MCF 10A (cell line): ENCODE measurements at regions of chr3 and their contacts with region 1.

Region 1: GRCh38 chr3:109275702-109276293 is 40.5 kb downstream of the DPPA2 start:
- DNase-seq: peak; percentile 58
- H3K4me3 Mint-ChIP-seq: no peak overlapping the region
- H3K27ac Mint-ChIP-seq: no peak overlapping the region
- H3K4me1 Mint-ChIP-seq: no peaks in the 10 kb centered on the region
- H3K27me3 Mint-ChIP-seq: no peaks in the 10 kb centered on the region
- CTCF ChIP-seq: peak; percentile 70

Region 2: DNA sequence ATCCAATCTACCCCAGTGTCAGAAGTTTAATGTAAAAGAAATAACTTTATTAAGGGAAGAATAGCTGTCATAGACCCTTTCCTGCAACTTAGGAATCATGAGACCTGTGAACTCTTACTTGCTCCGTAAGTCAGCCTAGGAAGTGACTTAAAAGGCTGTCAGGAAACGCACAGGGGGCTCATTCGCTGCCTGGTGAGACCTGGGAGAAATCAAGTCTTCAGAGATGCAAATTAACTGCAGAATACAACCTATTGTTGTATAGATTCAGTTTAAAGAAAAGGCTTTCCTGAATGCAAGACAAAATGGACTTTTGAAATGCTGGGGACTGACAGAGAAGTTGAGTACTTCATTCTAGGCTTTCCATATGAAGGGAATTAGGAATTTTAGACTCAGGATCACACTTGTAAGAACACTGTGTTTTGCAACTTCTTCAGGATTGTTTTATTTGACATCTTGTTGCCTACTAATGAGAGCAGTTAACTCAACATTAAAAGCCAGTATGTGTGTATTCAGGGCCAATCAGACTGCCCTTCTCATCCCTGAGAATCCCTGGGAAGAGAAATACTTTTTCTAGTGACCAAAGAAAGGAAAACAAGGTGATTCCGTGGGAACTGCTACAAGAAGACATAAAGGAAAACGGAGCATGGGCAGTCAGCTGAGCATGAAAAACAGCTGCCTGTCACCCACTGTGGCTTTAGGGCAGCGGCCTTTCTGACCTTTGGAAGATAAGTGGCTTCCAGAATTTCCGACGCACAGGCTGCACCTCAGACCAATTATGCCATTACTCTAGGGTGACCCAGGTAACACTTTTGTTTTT is 80.0 kb after region 1 on chr3:
- CTCF ChIA-PET with region 1: no interaction called
- POLR2A ChIA-PET with region 1: no interaction called
- intact Hi-C with region 1: no loop called
- DNase-seq: no peak
- H3K4me3 Mint-ChIP-seq: no peak overlapping the region
- H3K27ac Mint-ChIP-seq: no peak overlapping the region
- H3K4me1 Mint-ChIP-seq: no peaks in the 10 kb centered on the region
- H3K27me3 Mint-ChIP-seq: no peaks in the 10 kb centered on the region
- CTCF ChIP-seq: no peak

Region 3: GRCh38 chr3:109369510-109369909 is 93.7 kb after region 1 on chr3:
- CTCF ChIA-PET with region 1: interaction called, 3 read pairs
- POLR2A ChIA-PET with region 1: no interaction called
- intact Hi-C with region 1: loop called (anchors 1 kb)
- DNase-seq: no peak
- H3K4me3 Mint-ChIP-seq: no peak overlapping the region
- H3K27ac Mint-ChIP-seq: no peak overlapping the region
- H3K4me1 Mint-ChIP-seq: no peaks in the 10 kb centered on the region
- H3K27me3 Mint-ChIP-seq: no peaks in the 10 kb centered on the region
- CTCF ChIP-seq: no peak

Region 4: DNA sequence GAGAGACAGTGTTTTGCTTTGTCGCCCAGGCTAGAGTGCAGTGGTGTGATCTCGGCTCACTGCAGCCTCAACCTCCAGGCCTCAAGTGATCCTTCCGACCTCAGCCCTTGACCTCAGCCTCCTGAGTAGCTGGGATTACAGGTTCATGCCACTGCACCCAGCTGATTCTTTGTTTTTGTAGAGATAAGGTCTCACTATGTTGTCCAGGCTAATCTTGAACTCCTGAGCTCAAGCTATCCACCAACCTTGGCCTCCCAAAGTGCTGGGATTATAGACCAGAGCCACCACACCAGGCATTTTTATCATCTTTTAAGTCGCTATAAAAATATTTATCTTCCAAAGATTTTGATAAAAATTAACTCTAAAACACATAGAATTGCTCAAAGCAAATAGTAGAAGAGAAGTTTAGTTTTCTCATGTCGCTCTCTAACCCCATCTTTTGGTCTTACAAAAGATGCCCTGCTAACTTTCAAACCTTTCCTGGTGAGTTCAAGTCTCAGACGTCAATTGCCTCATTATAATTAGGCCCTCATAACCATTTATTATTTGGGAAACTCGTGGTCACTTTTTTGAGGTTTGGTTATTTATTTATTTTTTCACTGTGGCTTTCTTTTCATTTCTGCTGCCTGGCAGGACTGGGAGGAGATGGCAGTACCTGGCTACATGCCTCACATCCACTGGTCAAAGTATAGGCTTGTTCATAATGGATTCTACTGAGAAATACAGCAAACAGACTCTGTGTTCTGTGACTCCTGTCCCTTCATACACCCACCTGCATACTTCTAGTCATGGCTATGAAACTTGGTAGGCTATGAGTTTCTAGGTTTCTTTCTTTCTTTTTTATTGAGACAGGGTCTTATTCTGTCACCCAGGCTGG is 109.9 kb after region 1 on chr3:
- CTCF ChIA-PET with region 1: no interaction called
- POLR2A ChIA-PET with region 1: no interaction called
- intact Hi-C with region 1: no loop called
- DNase-seq: no peak
- H3K4me3 Mint-ChIP-seq: no peak overlapping the region
- H3K27ac Mint-ChIP-seq: no peak overlapping the region
- H3K4me1 Mint-ChIP-seq: no peaks in the 10 kb centered on the region
- H3K27me3 Mint-ChIP-seq: no peaks in the 10 kb centered on the region
- CTCF ChIP-seq: no peak

Region 5: GRCh38 chr3:109396806-109397205 is 121.0 kb after region 1 on chr3:
- CTCF ChIA-PET with region 1: interaction called, 8 read pairs
- POLR2A ChIA-PET with region 1: no interaction called
- intact Hi-C with region 1: loop called (anchors 1 kb)
- DNase-seq: no peak
- H3K4me3 Mint-ChIP-seq: no peak overlapping the region
- H3K27ac Mint-ChIP-seq: no peak overlapping the region
- H3K4me1 Mint-ChIP-seq: no peaks in the 10 kb centered on the region
- H3K27me3 Mint-ChIP-seq: no peaks in the 10 kb centered on the region
- CTCF ChIP-seq: no peak